CD8-positive, alpha-beta T cell (primary cell): ENCODE measurements at regions of chr4 and their contacts with region 1.

Region 1: DNA sequence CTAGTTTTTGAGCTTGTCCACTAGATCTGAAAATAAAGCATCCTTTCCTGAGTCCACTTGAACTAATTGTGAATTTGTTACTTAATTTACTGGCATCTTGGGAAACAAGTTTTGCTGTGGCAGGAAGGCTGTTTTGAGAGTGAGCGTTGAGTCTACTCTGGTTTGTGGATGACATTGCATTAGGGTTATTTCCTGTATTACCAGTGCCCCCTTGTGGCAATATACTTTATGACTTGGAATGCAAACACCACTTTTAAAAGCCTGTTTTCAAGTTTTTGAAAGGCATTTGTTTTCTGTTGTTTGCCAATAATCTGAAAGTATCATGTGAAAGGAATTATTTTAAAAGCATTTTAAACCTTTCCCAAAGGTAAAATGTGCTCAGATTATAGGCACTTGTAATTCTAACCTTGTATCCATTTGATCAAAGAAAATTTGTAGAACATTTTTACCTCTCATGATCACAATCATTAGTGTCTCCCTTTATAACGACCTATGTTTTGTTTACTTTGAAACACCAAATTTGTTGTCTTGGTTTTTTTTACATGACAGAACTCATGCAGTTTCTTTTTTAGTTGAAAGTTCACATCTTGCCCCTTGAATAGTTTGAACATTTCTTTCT is 18.0 kb upstream of the CYP2U1 start:
- DNase-seq: peak in 6 of 9 experiments; percentile 4 to 76 (median 30)
- ATAC-seq: peak; percentile 84
- H3K4me3 ChIP-seq: no peak overlapping the region
- H3K4me3 Mint-ChIP-seq: no peak overlapping the region
- H3K27ac ChIP-seq: no peak overlapping the region
- H3K27ac Mint-ChIP-seq: no peak overlapping the region
- H3K4me1 ChIP-seq: no peaks in the 10 kb centered on the region
- H3K4me1 Mint-ChIP-seq: peaks cover 2% of the 10 kb centered on the region
- H3K27me3 ChIP-seq: no peaks in the 10 kb centered on the region
- H3K27me3 Mint-ChIP-seq: no peaks in the 10 kb centered on the region
- CTCF ChIP-seq: peak; percentile 79

Region 2: DNA sequence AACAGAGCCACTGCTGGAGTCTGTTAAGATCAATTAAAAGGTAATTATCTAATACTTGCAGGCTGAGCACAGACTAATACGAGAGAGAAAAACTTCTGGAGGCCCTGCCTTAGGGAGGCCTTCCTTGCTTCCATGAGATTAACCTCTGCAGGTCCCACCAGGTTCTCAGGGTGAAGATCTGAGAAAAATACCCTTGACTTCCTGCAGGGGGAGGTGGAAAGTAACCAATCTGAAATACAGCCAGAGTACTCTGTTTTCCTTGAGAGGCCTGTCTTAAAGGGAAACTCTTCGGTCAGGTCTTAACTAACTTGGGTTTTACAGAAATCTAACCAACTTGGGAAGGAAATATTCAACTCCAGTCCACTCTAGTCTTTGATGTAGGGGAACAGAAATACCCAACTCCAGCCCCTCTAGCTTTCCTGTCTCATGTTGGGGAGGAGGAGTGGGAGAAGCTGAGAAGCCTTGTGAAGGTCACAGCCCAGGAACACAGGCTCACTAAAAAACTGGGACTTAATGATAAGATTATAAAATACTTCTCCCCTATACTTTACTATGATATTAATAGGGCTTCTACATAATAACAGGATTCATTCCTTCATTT is 1674.5 kb before region 1 on chr4:
- CTCF ChIA-PET with region 1: no interaction called
- POLR2A ChIA-PET with region 1: no interaction called
- intact Hi-C with region 1: loop called in 1 of 2 experiments (anchors 10 kb)
- DNase-seq: peak in 2 of 9 experiments; percentile 23 to 32
- ATAC-seq: no peak
- H3K4me3 ChIP-seq: no peak overlapping the region
- H3K4me3 Mint-ChIP-seq: no peak overlapping the region
- H3K27ac ChIP-seq: no peak overlapping the region
- H3K27ac Mint-ChIP-seq: no peak overlapping the region
- H3K4me1 ChIP-seq: no peaks in the 10 kb centered on the region
- H3K4me1 Mint-ChIP-seq: no peaks in the 10 kb centered on the region
- H3K27me3 ChIP-seq: no peaks in the 10 kb centered on the region
- H3K27me3 Mint-ChIP-seq: no peaks in the 10 kb centered on the region
- CTCF ChIP-seq: peak; percentile 58

Region 3: DNA sequence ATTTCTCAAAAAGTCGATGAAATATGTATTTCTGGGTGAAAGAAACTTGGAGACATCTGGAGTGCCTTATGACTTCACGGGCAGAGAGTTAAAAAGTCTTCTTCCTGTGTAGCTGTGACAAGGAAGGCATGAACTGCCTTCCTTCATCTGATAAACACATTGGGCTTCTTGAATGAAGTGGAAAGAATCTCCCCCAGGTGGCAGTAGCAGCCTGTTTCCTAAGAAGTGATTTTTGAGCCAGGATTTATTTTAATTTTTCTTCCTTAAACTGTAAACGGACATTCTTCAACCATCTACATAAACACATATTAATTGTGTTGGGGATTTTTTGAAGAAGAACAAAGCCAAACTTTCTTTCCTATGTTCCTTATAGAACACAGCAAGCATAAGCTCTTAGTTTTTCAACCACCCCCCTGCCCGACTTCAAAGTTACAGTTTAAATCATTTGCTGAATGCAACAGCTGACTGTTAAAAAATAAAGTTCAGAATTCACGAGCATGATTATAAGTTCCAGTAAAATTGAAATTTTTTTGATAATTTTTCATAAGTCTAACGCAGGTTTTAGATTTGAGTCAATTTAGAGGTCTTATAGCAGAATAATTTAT is 1543.8 kb before region 1 on chr4:
- CTCF ChIA-PET with region 1: no interaction called
- POLR2A ChIA-PET with region 1: no interaction called
- intact Hi-C with region 1: loop called in 1 of 2 experiments (anchors 10 kb)
- DNase-seq: peak in 2 of 9 experiments; percentile 16 to 33
- ATAC-seq: no peak
- H3K4me3 ChIP-seq: no peak overlapping the region
- H3K4me3 Mint-ChIP-seq: no peak overlapping the region
- H3K27ac ChIP-seq: no peak overlapping the region
- H3K27ac Mint-ChIP-seq: no peak overlapping the region
- H3K4me1 ChIP-seq: no peaks in the 10 kb centered on the region
- H3K4me1 Mint-ChIP-seq: no peaks in the 10 kb centered on the region
- H3K27me3 ChIP-seq: no peaks in the 10 kb centered on the region
- H3K27me3 Mint-ChIP-seq: peaks cover 14% of the 10 kb centered on the region
- CTCF ChIP-seq: peak; percentile 27

Region 4: GRCh38 chr4:107757864-107758476 is 155.4 kb before region 1 on chr4:
- CTCF ChIA-PET with region 1: interaction called, 12 read pairs
- POLR2A ChIA-PET with region 1: no interaction called
- intact Hi-C with region 1: loop called (anchors 1 kb)
- DNase-seq: peak in 2 of 9 experiments; percentile 15 to 40
- ATAC-seq: no peak
- H3K4me3 ChIP-seq: no peak overlapping the region
- H3K4me3 Mint-ChIP-seq: no peak overlapping the region
- H3K27ac ChIP-seq: no peak overlapping the region
- H3K27ac Mint-ChIP-seq: no peak overlapping the region
- H3K4me1 ChIP-seq: no peaks in the 10 kb centered on the region
- H3K4me1 Mint-ChIP-seq: no peaks in the 10 kb centered on the region
- H3K27me3 ChIP-seq: no peaks in the 10 kb centered on the region
- H3K27me3 Mint-ChIP-seq: peaks cover 10% of the 10 kb centered on the region
- CTCF ChIP-seq: peak; percentile 76

Region 5: GRCh38 chr4:107930821-107931774 is 17.7 kb after region 1 on chr4 and contains the start of gene CYP2U1:
- CTCF ChIA-PET with region 1: interaction called, 3 read pairs
- POLR2A ChIA-PET with region 1: interaction called, 3 read pairs
- intact Hi-C with region 1: loop called in 1 of 2 experiments (anchors 2 kb)
- DNase-seq: peak; percentile 48 to 89 (median 80)
- ATAC-seq: peak; percentile 92
- H3K4me3 ChIP-seq: peak within 1 kb of the TSS; percentile 61 to 86
- H3K4me3 Mint-ChIP-seq: peak within 1 kb of the TSS; percentile 95
- H3K27ac ChIP-seq: peak within 1 kb of the TSS; percentile 48 to 55
- H3K27ac Mint-ChIP-seq: peak within 1 kb of the TSS; percentile 92
- H3K4me1 ChIP-seq: peaks cover 8% of the 10 kb centered on the region
- H3K4me1 Mint-ChIP-seq: peaks cover 35% of the 10 kb centered on the region
- H3K27me3 ChIP-seq: no peaks in the 10 kb centered on the region
- H3K27me3 Mint-ChIP-seq: no peaks in the 10 kb centered on the region
- CTCF ChIP-seq: no peak
- total RNA-seq, gene CYP2U1: 3.4 to 3.6 TPM